ENCODE measurements at regions of chr12 and their contacts with region 1.

Region 1: GRCh38 chr12:56571126-56571525 is 49.5 kb downstream of the RBMS2 start:
- DNase-seq: no peak
- H3K4me3 ChIP-seq: no peak overlapping the region
- H3K27ac ChIP-seq: peak overlapping the region; percentile 5 to 68 (median 30)
- H3K4me1 ChIP-seq: peaks cover 0 to 46% (median 20%) of the 10 kb centered on the region in 3 donors
- H3K27me3 ChIP-seq: no peaks in the 10 kb centered on the region
- CTCF ChIP-seq: no peak
- POLR2A ChIP-seq: no peak

Region 2: DNA sequence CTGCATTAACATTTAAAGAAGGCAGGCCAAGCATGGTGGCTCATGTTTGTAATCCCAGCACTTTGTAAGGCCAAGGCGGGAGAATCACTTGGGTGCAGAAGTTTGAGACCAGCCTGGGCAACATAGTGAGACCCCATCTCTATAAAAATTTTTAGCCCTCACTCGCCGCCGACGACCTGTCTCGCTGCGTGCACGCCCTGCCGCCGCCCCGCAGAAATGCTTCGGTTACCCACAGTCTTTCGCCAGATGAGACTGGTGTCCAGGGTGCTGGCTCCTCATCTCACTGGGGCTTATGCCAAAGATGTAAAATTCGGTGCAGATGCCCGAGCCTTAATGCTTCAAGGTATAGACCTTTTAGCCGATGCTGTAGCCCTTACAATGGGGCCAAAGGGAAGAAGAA is 60.3 kb before region 1 on chr12:
- intact Hi-C with region 1: loop called (anchors 5 kb)
- DNase-seq: no peak
- H3K4me3 ChIP-seq: no peak overlapping the region
- H3K27ac ChIP-seq: no peak overlapping the region
- H3K4me1 ChIP-seq: peaks cover 0 to 6% (median 0%) of the 10 kb centered on the region in 3 donors
- H3K27me3 ChIP-seq: no peaks in the 10 kb centered on the region
- CTCF ChIP-seq: no peak
- POLR2A ChIP-seq: no peak